Activated naive CD4-positive, alpha-beta T cell treated with anti-CD3 and anti-CD28 coated beads, Interleukin-2, amount 10 ng/mL, durations not matched to agents 7 days and 5 days (primary cell): ENCODE measurements at regions of chr2 and their contacts with region 1.

Region 1: GRCh38 chr2:241877989-241878970 is 8.8 kb downstream of the RTP5 start:
- DNase-seq: peak; percentile 82
- H3K4me3 Mint-ChIP-seq: no peak overlapping the region
- H3K27ac Mint-ChIP-seq: no peak overlapping the region
- H3K4me1 Mint-ChIP-seq: peaks cover 44% of the 10 kb centered on the region
- H3K27me3 Mint-ChIP-seq: peaks cover 5% of the 10 kb centered on the region

Region 2: DNA sequence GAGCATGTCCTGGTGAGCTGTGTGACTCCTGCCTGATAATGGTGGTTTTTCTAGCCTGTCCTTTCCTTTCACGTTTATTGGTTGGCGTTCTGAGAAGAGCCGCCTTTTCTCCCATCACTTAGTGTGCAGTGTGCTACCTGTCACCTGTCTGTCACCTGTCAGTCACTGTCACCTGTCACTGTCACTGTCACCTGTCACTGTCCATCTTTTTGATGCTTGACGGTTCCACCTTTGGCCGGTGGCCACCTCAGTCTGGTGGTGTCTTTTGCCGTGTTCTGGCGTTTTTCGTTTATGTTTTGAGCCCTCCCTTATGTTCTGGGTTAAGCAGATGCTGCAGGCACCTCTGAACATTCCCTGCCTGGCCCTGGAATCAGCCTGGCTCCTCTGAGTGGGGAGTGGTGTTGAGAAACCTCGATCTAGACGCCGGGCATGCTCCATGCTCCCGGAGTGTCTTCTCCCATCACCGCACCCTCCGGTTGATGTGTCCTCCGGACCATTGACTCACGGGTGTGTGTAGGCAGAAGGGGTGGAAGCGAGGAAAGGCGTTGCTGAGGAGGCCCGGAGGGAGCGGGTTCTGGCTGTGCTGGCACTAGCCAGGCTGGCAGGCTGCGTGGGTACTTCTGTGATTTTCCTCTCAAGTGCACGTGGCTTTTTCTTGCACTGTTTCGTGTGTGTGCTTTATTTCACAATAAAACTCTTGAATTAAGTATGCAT is 212.4 kb before region 1 on chr2:
- CTCF ChIA-PET with region 1: interaction called, 12 read pairs
- DNase-seq: no peak
- H3K4me3 Mint-ChIP-seq: no peak overlapping the region
- H3K27ac Mint-ChIP-seq: no peak overlapping the region
- H3K4me1 Mint-ChIP-seq: peaks cover 5% of the 10 kb centered on the region
- H3K27me3 Mint-ChIP-seq: no peaks in the 10 kb centered on the region

Region 3: DNA sequence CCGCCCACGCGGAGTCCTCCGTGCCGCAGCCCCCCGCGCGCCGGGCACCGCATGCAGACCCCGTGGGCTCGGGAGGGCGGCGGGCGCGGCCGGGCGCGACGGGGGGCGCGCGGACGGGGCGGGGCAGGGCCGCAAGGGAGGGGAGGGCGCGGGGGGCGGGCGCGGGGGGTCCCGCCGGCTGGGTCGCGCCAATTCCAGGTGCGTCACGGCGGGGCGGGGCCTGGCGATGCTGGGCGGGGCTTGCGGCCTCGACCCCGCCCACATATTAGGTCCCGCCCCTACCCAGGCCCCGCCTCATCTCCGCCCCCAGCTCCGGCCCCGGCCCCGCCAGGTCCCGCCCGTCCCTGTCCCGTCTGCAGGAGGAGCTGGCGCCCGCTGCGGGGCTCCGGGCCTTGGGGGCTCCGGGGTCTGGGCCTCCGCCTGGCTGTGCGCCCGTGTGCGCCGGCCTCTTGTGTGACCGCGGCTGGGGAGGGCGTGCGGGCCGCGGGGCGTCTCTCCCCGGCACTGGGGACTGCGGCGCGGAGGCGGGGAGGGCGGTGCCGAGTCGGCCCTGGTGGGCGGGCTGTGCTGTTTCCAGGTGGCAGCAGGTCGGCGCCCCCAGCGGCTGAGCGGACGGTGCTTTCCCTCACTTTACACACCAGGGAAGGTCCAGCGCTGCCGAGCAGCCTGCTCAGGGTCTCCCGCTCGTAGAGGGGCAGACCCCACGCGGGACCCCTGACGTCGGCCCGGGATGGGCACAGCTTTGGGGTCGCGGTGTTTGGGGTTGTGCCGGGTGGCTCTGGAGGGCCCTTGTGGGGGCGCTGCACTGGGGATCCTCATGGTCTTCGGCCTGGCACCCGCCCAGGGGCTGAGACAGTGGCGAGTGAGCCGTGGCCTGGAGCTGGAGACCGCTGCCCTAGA is 175.9 kb before region 1 on chr2:
- CTCF ChIA-PET with region 1: interaction called, 15 read pairs
- DNase-seq: peak; percentile 91
- H3K4me3 Mint-ChIP-seq: peak overlapping the region; percentile 81
- H3K27ac Mint-ChIP-seq: peak overlapping the region; percentile 85
- H3K4me1 Mint-ChIP-seq: peaks cover 31% of the 10 kb centered on the region
- H3K27me3 Mint-ChIP-seq: no peaks in the 10 kb centered on the region

Region 4: GRCh38 chr2:241734467-241735208 is 143.6 kb before region 1 on chr2 and contains the start of gene D2HGDH:
- CTCF ChIA-PET with region 1: interaction called, 14 read pairs
- DNase-seq: peak; percentile 96
- H3K4me3 Mint-ChIP-seq: peak within 1 kb of the TSS; percentile 80
- H3K27ac Mint-ChIP-seq: peak within 1 kb of the TSS; percentile 81
- H3K4me1 Mint-ChIP-seq: peaks cover 56% of the 10 kb centered on the region
- H3K27me3 Mint-ChIP-seq: no peaks in the 10 kb centered on the region

Region 5: GRCh38 chr2:241867776-241868420 is 10.4 kb before region 1 on chr2:
- CTCF ChIA-PET with region 1: interaction called, 15 read pairs
- DNase-seq: peak; percentile 45
- H3K4me3 Mint-ChIP-seq: no peak overlapping the region
- H3K27ac Mint-ChIP-seq: no peak overlapping the region
- H3K4me1 Mint-ChIP-seq: peaks cover 42% of the 10 kb centered on the region
- H3K27me3 Mint-ChIP-seq: peaks cover 82% of the 10 kb centered on the region